ENCODE measurements at regions of chr5 and their contacts with region 1.

Region 1: GRCh38 chr5:148443998-148444397 is 60.2 kb downstream of the FBXO38 start:
- DNase-seq: peak in 11 of 14 experiments; percentile 4 to 71 (median 25)
- ATAC-seq: peak; percentile 83
- H3K4me3 ChIP-seq: no peak overlapping the region
- H3K4me3 Mint-ChIP-seq: no peak overlapping the region
- H3K27ac ChIP-seq: no peak overlapping the region
- H3K27ac Mint-ChIP-seq: no peak overlapping the region
- H3K4me1 ChIP-seq: no peaks in the 10 kb centered on the region
- H3K4me1 Mint-ChIP-seq: no peaks in the 10 kb centered on the region
- H3K27me3 ChIP-seq: no peaks in the 10 kb centered on the region
- H3K27me3 Mint-ChIP-seq: no peaks in the 10 kb centered on the region
- CTCF ChIP-seq: peak; percentile 83

Region 2: GRCh38 chr5:149035372-149035790 is 591.4 kb after region 1 on chr5:
- CTCF ChIA-PET with region 1: interaction called, 5 read pairs
- POLR2A ChIA-PET with region 1: no interaction called
- intact Hi-C with region 1: loop called (anchors 1 to 10 kb)
- DNase-seq: peak; percentile 47 to 78 (median 57)
- ATAC-seq: peak; percentile 74
- H3K4me3 ChIP-seq: no peak overlapping the region
- H3K4me3 Mint-ChIP-seq: no peak overlapping the region
- H3K27ac ChIP-seq: no peak overlapping the region
- H3K27ac Mint-ChIP-seq: no peak overlapping the region
- H3K4me1 ChIP-seq: peaks cover 6% of the 10 kb centered on the region
- H3K4me1 Mint-ChIP-seq: peaks cover 25% of the 10 kb centered on the region
- H3K27me3 ChIP-seq: no peaks in the 10 kb centered on the region
- H3K27me3 Mint-ChIP-seq: peaks cover 5% of the 10 kb centered on the region
- CTCF ChIP-seq: peak; percentile 83

Region 3: DNA sequence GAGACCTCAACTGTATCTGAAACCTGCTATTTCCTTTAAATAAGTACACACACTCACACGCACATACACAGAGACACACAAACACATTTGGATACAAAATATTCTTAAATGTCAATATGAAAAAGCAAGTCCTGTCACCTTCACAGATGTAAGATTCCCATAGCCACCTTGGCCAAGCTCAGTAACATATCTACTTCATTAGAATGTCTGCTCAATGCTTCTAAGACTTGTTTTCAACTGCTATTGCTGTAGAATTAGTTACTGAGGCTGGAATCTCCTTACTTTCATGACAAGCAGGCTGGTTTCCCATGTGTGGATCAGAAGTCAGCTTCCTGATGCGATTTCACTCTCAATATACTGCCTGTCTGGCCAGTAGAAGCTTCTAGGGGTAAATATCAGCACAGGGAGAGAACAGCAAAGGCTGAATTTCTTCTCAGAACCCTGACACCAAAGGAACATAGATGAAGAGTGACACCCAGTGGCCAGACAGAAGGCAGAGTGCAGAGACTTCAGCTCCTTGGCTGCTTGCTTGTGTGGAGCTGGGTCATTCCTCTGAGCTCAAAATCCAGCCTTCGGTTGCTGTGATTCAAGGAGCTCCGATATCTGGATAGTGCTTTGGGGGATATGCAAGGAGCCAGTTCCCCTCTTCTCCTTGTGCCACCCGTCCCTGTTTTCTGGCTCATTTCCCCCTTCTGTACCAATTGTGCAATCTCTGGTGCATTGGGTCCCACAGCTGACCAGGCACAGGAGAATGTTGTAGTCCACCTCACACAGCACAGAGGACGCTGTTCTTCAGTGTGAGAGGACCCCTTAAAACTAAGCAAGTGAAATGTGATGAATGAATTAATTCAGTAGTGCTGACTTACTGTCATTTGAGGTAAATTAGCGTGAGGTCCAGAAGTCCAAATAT is 670.7 kb after region 1 on chr5:
- CTCF ChIA-PET with region 1: no interaction called
- POLR2A ChIA-PET with region 1: no interaction called
- intact Hi-C with region 1: loop called in 1 of 2 experiments (anchors 5 kb)
- DNase-seq: peak in 12 of 14 experiments; percentile 7 to 68 (median 16)
- ATAC-seq: peak; percentile 32
- H3K4me3 ChIP-seq: no peak overlapping the region
- H3K4me3 Mint-ChIP-seq: no peak overlapping the region
- H3K27ac ChIP-seq: no peak overlapping the region
- H3K27ac Mint-ChIP-seq: no peak overlapping the region
- H3K4me1 ChIP-seq: no peaks in the 10 kb centered on the region
- H3K4me1 Mint-ChIP-seq: no peaks in the 10 kb centered on the region
- H3K27me3 ChIP-seq: peaks cover 4 to 28% of the 10 kb centered on the region in 2 experiments
- H3K27me3 Mint-ChIP-seq: peaks cover 37% of the 10 kb centered on the region
- CTCF ChIP-seq: peak; percentile 59

Measured in CD4-positive, alpha-beta T cell (primary cell).